BJ (cell line): ENCODE measurements at regions of chr1 and their contacts with region 1.

Region 1: DNA sequence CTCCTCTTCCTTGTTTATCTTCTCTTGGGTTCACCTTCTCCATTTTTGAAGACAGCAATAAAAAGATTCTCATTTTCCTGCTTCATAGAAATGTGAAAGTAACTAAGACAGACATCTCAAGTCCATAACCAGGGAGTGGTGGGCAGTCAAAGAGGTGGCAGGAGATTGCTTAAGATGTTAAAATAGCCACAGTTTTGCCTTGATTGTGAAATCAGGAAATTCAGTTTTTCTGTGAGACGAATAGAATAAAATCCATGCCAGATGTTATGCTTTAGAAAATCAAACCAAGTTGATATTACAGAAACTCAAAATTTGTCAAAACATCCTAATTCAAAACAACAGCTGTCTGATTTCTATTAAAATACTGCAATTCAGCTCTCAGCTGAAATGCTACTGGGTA is 57.2 kb downstream of the TNN start:
- DNase-seq: no peak
- H3K4me3 ChIP-seq: no peak overlapping the region
- H3K27me3 ChIP-seq: no peaks in the 10 kb centered on the region; the same call in 1 of the 2 replicates
- CTCF ChIP-seq: no peak

Region 2: GRCh38 chr1:175035865-175036264 is 89.0 kb before region 1 on chr1:
- CTCF ChIA-PET with region 1: interaction called, 11 read pairs
- POLR2A ChIA-PET with region 1: no interaction called
- DNase-seq: no peak
- H3K4me3 ChIP-seq: no peak overlapping the region
- H3K27me3 ChIP-seq: no peaks in the 10 kb centered on the region
- CTCF ChIP-seq: no peak